ENCODE measurements at regions of chr3 and their contacts with region 1.

Region 1: DNA sequence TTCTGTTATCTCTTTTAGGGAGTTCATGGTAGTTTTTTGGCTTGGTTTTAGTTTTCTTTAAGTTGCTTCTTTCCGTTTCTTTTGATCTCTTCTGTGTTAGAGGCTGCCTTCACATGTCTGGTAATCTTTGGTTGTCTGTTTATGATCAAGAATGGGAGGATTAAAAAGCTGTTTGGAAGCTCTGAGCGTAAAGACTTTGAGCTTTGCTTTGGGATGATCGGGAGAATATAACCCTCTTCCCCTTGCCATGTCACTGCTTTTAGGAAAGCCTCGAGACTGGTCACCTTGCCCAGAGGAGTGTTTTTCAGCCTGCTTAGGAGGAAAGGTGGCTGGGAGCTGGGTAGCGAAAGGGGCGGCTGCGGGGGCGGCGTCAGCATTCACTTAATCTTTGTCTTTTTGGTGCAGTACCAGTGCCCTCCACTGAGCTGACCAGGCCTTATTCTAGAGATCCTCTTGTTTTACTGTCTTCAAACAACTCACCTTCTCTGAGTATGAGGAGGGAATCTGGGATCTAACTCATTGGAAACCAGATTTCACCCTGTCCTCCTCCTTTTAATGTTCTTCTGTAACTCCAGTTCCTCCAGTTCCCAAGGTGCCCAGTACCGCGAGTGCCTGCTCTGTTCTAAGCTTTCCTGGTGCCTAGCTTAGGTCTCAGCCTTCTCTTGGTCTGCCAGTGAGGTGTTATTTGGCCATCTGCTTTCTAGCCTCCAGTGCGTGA is 15.5 kb downstream of the TATDN2 start:
- DNase-seq: peak; percentile 90
- ATAC-seq: peak; percentile 98
- H3K4me3 Mint-ChIP-seq: peak overlapping the region; percentile 59
- H3K27ac Mint-ChIP-seq: peak overlapping the region; percentile 90
- H3K4me1 Mint-ChIP-seq: peaks cover 70% of the 10 kb centered on the region
- H3K27me3 Mint-ChIP-seq: no peaks in the 10 kb centered on the region
- CTCF ChIP-seq: peak; percentile 74

Region 2: GRCh38 chr3:10253731-10254130 is 10.1 kb before region 1 on chr3:
- CTCF ChIA-PET with region 1: interaction called, 27 read pairs
- POLR2A ChIA-PET with region 1: interaction called, 12 read pairs
- intact Hi-C with region 1: no loop called
- DNase-seq: no peak
- ATAC-seq: no peak
- H3K4me3 Mint-ChIP-seq: no peak overlapping the region
- H3K27ac Mint-ChIP-seq: peak overlapping the region; percentile 60
- H3K4me1 Mint-ChIP-seq: peaks cover 72% of the 10 kb centered on the region
- H3K27me3 Mint-ChIP-seq: no peaks in the 10 kb centered on the region
- CTCF ChIP-seq: no peak

Region 3: GRCh38 chr3:10286596-10287330 is 23.0 kb after region 1 on chr3:
- CTCF ChIA-PET with region 1: interaction called, 17 read pairs
- POLR2A ChIA-PET with region 1: no interaction called
- intact Hi-C with region 1: no loop called
- DNase-seq: peak; percentile 60
- ATAC-seq: peak; percentile 49
- H3K4me3 Mint-ChIP-seq: no peak overlapping the region
- H3K27ac Mint-ChIP-seq: no peak overlapping the region
- H3K4me1 Mint-ChIP-seq: peaks cover 35% of the 10 kb centered on the region
- H3K27me3 Mint-ChIP-seq: no peaks in the 10 kb centered on the region
- CTCF ChIP-seq: peak; percentile 37

Region 4: GRCh38 chr3:10395671-10396070 is 131.9 kb after region 1 on chr3:
- CTCF ChIA-PET with region 1: no interaction called
- POLR2A ChIA-PET with region 1: no interaction called
- intact Hi-C with region 1: no loop called
- DNase-seq: peak; percentile 33
- ATAC-seq: peak; percentile 56
- H3K4me3 Mint-ChIP-seq: no peak overlapping the region
- H3K27ac Mint-ChIP-seq: no peak overlapping the region
- H3K4me1 Mint-ChIP-seq: peaks cover 17% of the 10 kb centered on the region
- H3K27me3 Mint-ChIP-seq: no peaks in the 10 kb centered on the region
- CTCF ChIP-seq: no peak